ENCODE measurements at regions of chr4 and their contacts with region 1.

Region 1: DNA sequence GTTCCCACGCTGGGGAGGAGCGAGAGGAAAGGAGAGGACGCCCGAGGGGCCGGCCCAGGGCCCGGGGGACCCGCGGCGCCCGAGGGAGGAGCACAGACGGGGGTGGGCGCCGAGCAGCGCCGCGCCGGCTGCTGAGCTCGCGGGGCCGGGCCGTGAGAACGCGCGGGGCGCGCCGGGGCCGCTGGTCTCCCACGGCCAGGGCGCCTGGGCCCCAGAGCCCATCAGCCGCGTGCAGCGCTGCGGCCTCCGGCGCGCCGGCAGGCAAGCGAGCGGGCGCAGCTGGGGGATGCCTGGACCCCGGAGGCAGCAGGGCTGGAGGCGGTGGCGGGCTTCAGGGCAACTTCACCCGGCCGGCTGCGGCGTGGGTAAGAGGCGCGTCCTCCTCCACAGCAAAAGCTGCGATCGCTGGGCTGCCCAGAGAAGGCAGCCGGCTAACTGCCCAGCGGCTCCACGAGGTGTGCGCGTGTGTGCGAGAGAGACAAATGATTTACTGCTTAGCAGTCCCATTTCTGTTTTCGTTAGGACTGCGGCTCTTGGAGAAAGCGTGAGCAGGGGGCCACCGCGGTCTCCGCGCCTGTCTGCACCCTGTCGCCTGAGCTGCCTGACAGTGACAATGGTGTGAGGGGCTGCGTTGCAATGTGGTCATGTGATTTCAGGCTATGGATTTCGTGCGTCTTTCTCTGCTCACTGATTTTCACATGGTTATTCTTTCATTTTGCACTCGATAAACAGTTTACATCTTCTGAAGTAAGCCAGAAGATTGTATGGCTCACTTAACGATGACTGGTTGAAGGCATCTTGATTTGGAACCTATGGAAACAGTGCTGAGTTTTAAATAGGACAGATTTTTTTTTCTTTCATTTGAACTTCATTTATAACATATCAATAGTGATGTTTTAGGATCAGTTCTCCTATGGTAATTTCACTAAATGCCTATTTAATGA is 1.2 kb downstream of the GUCY1A1 start:
- DNase-seq: peak; percentile 76

Region 2: GRCh38 chr4:155512817-155513216 is 155.0 kb before region 1 on chr4:
- intact Hi-C with region 1: loop called (anchors 5 kb)
- DNase-seq: no peak

Region 3: DNA sequence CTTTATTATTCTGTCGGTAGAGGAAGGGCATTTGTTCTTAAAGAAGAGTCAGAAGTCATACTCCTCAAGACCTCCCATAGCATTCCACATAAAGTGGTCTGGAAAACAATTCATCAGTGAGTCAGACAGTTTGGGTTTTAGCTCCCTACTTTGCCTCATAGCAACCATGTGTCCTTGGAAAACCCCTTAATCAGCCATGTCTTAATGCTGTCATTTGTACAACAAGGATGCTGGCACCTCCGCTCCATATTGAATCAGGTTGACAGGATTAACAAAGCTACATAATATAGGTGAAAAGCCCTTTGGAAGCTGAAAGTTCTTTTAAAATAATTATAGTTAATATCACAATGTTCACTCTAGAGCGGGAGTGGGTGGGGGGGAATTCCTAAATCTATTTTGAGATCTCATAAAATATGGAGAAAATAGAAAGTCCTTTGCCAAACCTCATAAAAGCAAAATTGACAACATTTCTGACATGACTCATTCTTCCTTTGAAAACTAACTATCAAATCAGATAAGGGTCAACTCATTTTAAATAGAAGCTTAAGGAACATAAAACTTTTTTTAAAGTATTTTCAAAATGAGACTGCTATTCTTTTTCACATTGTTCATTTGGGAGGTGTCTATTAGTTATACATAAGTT is 38.5 kb before region 1 on chr4:
- intact Hi-C with region 1: no loop called
- DNase-seq: no peak

Region 4: GRCh38 chr4:155758481-155759404 is 90.9 kb after region 1 on chr4 and contains the start of gene GUCY1B1:
- intact Hi-C with region 1: loop called (anchors 5 kb)
- DNase-seq: peak; percentile 96
- total RNA-seq, gene GUCY1B1: 17.0 TPM

Region 5: DNA sequence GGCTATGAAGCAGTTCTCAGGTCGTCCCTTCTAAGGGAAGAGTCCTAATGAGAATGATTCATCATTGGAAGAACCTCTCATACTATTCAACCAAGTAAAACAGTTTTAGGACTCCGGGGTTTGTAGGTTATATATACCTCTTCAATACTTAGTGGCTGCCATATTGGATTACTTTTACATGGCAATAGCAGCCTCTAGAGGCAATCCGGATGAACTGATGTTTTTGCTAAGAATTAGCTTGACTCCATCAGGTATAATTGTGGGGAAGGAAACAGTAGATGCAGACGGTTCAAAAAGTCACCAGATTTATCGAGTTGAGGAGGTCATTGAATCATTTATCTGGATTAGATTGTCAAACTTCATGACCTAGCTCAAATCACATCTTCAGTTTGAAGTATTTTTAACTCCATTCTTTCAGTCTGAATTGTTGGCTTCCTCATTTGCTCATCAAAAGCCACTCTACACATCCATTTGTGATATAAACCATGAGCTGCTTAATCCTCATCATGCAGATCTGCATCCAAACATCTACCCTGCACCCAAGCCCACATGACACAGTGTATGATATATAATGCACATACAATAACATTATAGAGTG is 119.4 kb after region 1 on chr4:
- intact Hi-C with region 1: loop called (anchors 10 kb)
- DNase-seq: no peak